ENCODE measurements at regions of chr6 and their contacts with region 1.

Region 1: DNA sequence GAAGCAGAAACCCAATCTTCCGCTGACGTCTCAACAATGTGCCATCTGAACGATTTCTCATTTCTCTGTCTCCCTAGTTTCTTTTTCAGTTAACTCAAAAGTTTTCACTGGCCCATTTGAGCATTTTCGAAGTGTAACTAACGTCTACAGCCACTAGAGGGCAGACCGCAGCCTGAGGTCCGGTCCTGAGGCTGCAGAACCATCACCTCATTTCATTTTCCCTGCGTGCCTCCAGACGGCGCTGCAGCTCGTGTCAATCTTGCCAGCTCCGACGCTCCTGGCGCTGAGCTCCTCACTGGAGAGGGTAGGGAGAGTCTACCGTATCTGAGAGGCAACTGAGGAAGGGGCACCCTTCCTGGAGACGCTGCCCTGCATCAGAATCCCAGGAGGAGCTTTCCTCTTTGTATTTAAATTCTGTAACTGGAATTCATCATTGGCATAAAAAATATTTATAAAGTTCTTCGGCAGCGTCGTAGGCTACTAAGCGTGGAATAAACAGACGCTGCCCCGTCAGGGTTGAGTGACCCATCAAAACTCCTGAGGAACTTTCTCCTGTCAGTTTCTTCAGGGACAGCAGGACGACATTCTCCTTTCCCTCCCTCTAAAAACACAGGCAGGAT is 28.5 kb upstream of the DTNBP1 start:
- DNase-seq: peak; percentile 80 to 84
- ATAC-seq: peak; percentile 93

Region 2: GRCh38 chr6:15839969-15840541 is 148.7 kb after region 1 on chr6:
- intact Hi-C with region 1: no loop called
- DNase-seq: no peak
- ATAC-seq: no peak

Region 3: DNA sequence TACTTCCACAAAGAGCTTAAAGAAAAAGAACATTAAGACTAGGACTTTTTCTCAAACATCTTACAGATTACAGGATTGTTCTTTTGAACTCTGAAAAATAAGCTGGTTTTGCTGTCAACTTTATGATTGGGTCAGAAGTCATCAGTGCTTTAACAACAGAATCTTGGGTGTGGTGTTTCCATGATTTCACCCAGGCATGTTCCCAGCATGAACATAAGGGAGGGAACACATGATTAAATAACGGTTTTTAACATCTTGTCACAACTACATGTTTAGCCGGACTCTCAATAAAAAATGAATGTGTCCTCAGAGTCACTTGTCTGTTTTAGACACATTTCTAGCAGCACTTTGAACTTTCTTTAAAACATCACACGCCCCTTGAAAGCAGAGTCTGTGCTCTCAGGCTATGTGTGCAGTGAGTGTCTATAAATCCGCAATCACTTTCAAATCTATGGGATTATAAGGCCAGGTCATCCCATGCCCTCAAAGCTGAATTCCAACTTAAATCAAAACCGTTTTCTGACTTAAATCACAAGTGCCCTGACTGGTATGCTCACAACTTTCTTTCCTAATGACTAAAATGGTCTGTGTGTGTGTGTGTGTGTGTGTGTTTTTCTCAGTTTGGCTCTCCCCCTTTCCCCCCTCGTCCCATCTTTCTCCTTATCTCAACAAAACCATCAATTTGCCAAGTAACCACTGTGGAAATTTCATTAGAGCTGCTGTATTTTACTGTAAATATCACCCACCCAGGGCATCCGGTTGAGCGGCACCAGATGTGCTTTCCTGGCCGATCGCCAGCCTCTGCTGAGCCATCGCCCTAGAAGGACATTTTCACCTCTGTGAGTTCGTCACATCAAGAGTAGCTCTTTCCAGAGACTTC is 188.3 kb after region 1 on chr6:
- intact Hi-C with region 1: no loop called
- DNase-seq: peak; percentile 67 to 72
- ATAC-seq: peak; percentile 42

Region 4: DNA sequence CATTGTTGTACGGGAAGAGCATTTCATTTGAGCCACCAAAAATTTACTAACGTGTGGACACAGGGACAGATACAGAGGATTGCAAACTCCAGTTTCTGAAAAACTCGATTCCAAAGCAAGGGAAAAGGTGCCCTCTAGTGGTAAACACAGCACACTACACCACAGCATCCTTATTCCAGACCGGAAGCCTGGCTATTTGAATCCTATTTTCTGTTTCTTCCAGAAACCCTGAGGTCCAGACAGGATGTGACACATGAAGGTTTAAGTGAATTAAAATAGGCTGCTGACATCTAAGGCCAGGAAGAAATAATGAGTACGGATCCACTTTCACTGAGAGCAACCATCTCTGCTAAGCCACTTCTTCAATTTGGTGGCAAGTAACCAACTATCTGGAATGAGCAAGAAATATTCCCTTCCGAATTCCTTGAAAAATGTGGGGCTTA is 515.3 kb after region 1 on chr6:
- intact Hi-C with region 1: loop called in 1 of 2 experiments (anchors 5 kb)
- DNase-seq: peak in 1 of 2 donors; percentile 46
- ATAC-seq: peak; percentile 77